ENCODE measurements at regions of chr17 and their contacts with region 1.

Region 1: DNA sequence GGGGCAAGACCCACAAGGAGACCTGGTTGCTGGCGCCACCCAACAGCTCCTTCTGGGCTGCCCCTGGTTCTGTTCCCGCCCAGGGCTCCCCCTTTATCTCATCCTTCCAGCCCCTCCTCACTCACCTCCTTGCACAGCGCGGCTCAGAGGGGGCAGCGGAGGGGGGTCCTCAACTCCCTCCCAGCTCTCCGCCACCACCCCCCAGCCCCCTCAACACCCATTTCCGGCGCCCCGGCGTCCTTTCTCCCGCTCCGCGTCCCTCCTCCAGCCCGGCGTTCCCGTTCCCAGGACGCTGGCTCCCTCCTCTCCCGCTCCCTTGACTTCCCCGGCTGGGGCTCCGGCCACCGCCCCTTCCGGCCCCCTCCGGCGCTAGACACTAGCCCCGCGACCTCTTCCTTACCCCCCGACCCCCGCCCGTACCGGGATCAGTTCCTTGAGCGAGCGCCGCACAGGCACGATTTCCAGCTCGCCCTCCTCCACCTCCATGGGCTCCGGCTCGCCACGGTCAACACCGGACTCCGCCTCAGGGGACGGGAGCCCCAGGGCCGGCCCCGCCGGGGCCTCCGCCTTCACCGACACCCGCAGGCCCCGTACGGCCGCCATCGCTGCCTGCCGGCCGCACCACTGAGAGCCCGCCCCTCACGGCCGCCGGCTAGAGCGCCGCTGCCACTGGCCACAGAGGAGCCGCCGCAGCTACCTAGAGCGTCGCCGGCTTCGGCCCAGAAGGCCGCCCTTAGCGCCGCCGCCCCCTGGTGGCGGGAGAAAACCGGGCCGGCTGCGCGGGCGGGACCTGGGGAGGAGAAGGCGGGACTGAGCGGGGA is at the start of gene NCBP3:
- DNase-seq: peak; percentile 90
- ATAC-seq: peak; percentile 94
- H3K4me3 Mint-ChIP-seq: peak within 1 kb of the TSS; percentile 96
- H3K27ac Mint-ChIP-seq: peak within 1 kb of the TSS; percentile 93
- H3K4me1 Mint-ChIP-seq: peaks cover 25% of the 10 kb centered on the region
- H3K27me3 Mint-ChIP-seq: peaks cover 2% of the 10 kb centered on the region
- CTCF ChIP-seq: peak; percentile 87
- total RNA-seq, gene NCBP3: 34.7 to 41.1 TPM

Region 2: DNA sequence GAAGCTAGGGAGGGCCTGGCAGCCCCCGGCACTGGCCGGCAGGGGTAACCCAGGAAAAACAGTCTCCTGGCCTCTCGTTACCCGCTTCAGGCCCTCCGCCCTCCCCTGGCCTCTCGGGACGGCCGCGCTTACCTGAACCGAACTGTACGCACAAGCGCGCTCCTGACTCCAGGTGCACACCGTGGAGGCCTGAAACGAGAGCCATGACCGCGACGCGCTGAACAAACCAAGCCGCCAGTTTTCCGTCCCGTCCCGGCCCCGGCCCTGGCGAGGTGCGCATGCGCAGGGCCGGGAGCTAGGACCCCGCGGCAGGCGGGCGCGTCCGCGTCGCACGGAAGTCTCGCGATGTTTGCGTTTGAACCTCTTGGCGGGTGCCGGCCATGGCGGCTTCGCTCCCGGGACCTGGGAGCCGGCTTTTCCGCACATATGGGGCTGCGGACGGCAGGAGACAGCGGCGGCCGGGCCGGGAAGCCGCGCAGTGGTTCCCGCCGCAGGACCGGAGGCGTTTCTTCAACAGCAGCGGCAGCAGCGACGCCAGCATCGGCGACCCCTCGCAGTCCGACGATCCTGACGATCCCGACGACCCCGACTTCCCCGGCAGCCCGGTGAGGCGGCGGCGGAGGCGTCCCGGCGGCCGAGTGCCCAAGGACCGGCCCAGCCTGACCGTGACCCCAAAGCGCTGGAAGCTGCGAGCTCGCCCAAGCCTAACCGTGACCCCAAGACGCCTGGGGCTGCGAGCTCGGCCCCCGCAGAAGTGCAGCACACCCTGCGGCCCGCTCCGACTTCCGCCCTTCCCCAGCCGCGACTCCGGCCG is 122.1 kb before region 1 on chr17 and contains the start of gene HASPIN:
- CTCF ChIA-PET with region 1: interaction called, 13 read pairs
- POLR2A ChIA-PET with region 1: interaction called, 9 read pairs
- intact Hi-C with region 1: no loop called
- DNase-seq: peak; percentile 93
- ATAC-seq: peak; percentile 91
- H3K4me3 Mint-ChIP-seq: peak within 1 kb of the TSS; percentile 81
- H3K27ac Mint-ChIP-seq: peak within 1 kb of the TSS; percentile 92
- H3K4me1 Mint-ChIP-seq: peaks cover 54% of the 10 kb centered on the region
- H3K27me3 Mint-ChIP-seq: no peaks in the 10 kb centered on the region
- CTCF ChIP-seq: peak; percentile 42
- total RNA-seq, gene HASPIN: 20.7 to 21.3 TPM

Region 3: DNA sequence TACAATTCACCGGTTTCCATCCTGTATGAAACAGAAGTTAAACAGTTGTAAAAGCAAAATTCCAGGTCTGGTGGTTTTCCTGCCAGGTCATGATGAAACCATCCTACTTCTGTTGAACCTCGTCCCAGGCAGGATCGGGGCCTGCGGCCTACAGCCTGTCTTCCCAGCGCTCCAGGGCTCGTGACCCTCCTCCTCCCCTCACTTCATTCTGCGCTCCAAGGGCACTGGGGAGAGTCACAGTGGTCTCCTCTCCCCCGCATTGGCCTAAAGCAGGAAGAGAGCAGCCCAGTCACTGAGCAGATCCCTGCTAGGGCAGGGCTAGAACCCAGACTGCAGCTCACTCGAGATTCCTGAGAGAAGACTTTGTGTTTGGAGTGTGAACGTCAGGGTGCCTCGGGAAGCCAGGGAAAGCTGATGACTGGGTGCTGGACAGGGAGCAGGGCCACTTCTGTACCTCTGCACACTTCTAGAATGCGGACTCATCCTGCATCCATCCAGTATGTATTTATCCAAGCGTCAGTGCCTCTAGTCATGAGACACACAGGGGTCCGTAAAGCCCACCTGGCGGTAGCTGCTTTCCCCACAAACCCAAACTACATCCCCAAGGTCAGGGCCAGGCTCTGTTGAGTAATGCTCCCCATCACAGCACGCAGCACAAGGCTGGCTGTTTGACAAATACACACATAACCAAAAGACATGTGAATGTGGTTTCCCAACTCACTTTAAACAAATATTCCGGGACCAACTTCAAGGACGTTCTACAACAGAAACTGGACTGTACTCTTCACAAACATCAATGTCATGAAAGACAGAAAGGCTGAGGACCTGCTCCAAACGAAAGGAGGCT is 43.1 kb before region 1 on chr17:
- CTCF ChIA-PET with region 1: interaction called, 38 read pairs
- POLR2A ChIA-PET with region 1: no interaction called
- intact Hi-C with region 1: no loop called
- DNase-seq: no peak
- ATAC-seq: no peak
- H3K4me3 Mint-ChIP-seq: no peak overlapping the region
- H3K27ac Mint-ChIP-seq: no peak overlapping the region
- H3K4me1 Mint-ChIP-seq: peaks cover 37% of the 10 kb centered on the region
- H3K27me3 Mint-ChIP-seq: no peaks in the 10 kb centered on the region
- CTCF ChIP-seq: no peak

Region 4: GRCh38 chr17:3812771-3813170 is 33.1 kb before region 1 on chr17:
- CTCF ChIA-PET with region 1: interaction called, 38 read pairs
- POLR2A ChIA-PET with region 1: interaction called, 3 read pairs
- intact Hi-C with region 1: no loop called
- DNase-seq: no peak
- ATAC-seq: no peak
- H3K4me3 Mint-ChIP-seq: no peak overlapping the region
- H3K27ac Mint-ChIP-seq: no peak overlapping the region
- H3K4me1 Mint-ChIP-seq: peaks cover 9% of the 10 kb centered on the region
- H3K27me3 Mint-ChIP-seq: no peaks in the 10 kb centered on the region
- CTCF ChIP-seq: no peak

Region 5: DNA sequence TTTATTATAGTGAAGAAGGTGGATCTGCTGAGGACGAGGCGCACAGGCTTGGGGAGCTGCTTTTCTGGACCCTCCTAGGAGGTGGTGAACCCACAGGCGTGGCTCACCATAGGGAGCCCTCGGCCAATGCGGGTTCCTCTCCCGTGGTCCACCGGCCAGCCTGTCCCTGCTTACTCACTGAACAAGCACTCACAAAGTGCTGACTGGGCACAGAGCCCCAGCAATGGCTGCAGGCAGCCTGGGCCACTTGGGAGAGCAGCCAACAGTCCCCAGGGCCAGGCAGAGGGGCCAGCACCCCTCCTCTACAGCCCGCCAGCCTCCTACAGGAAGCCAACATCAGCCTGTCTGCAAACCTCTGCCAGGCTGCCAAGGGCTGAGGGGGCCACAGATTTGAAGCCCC is 19.3 kb after region 1 on chr17:
- CTCF ChIA-PET with region 1: interaction called, 51 read pairs
- POLR2A ChIA-PET with region 1: no interaction called
- intact Hi-C with region 1: no loop called
- DNase-seq: no peak
- ATAC-seq: no peak
- H3K4me3 Mint-ChIP-seq: no peak overlapping the region
- H3K27ac Mint-ChIP-seq: no peak overlapping the region
- H3K4me1 Mint-ChIP-seq: no peaks in the 10 kb centered on the region
- H3K27me3 Mint-ChIP-seq: no peaks in the 10 kb centered on the region
- CTCF ChIP-seq: no peak